G401 (cell line): ENCODE measurements at regions of chr15 and their contacts with region 1.

Region 1: DNA sequence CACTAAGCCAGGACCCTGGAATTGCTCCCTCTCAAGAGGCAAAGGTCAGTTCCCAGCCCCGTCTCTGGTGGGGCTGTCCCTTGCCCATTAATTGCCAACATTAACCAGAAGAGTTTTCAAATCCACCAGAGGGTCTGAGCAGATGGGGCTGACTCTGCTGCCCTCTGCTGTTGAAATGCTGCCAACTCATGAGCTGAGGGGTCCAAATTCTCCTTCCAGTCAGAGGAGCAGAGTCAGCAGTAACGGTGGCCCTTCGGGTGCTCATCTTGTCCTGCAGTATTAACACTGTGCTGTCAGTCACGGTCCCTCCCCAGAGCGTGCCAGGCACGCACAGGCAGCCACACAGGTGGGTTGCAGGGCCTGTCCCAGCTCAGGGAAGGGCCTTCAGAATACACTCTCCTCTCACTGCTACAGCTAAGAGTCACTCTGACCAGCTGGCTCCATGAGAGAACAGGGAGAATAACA is 10.7 kb upstream of the SPTBN5 start:
- DNase-seq: peak; percentile 93

Region 2: DNA sequence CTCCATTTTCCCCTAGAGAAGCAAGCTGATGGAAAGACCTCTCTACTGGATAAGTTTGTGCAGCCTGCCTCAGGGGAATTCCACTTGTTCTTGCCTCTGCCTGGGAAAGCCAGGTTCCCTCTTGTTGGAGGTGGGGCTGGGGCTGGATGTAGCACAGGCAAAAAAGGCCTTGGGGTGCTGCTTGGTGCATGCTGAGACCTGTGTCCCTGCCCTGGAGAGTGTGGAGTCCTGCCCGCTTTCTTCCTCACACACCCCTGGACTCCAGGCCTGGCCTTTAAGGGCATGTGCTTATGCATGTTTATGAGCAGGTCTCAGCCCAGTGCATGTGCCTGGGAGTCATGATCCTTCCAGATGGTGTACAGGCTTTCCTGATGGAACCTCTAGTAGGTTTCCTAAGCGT is 100.2 kb before region 1 on chr15:
- in situ Hi-C with region 1: loop called (anchors 5 kb)
- DNase-seq: no peak

Region 3: GRCh38 chr15:41870689-41871081 is 33.9 kb before region 1 on chr15:
- in situ Hi-C with region 1: no loop called
- DNase-seq: no peak

Region 4: DNA sequence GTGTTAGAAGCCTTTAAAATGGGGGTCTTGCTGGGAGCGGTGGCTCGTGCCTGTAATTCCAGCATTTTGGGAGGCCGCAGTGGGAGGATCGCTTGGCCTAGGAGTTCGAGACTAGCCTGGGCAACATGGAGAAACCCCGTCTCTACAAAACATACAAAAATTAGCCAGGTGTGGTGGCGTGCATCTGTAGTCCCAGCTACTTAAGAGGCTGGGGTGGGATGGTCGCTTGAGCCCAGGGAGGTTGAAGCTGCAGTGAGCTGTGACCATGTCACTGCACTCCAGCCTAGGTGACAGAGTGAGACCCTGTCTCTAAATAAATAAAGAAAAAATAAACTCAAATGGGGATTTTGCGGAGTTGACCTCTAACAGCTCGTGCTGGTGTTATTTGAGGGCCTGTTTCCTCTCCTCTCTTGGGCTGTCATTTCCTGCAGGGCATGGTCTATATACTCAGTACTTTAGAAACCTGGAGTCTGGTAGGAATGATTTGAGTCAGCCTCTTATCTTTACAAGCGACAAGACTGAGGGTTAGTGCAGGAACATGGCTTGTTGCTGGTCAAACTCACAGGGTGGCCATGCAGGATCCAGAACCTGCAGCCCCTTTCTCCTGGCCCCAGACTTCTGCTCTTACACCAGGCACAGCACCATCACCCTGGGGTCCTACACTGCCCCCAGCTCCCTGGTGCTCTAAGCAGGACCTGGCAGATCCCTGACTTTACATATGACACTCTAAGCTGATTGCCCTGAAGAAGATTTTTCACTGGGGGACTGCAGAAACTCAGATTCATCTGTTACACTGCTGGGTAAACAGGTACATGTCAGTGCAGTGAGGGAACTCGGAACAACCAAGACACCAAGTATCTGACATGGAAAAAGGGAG is 52.7 kb after region 1 on chr15:
- in situ Hi-C with region 1: no loop called
- DNase-seq: no peak